ENCODE measurements at regions of chr16 and their contacts with region 1.

Region 1: DNA sequence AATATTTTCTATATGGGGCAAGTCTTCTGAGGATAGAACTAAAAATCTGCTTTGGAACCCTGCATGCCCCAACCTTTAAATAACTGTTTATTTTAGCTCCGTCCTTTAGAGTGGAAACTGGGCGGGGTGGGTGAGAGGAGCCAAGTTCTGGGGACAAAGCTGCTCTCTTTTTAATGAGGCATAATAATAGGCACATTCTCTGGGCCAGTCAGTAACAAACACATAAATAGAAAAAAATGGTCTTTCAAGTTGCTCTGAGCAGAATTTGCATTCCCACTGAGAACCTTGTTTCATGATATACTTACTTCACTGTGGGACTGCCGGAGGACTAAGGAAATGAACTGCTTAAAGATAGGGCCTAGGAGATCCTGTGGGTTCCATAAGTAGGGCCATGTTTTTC is 51.5 kb downstream of the KNOP1 start:
- DNase-seq: peak; percentile 63
- ATAC-seq: peak; percentile 90

Region 2: GRCh38 chr16:19517418-19518089 is 148.9 kb before region 1 on chr16:
- intact Hi-C with region 1: no loop called
- DNase-seq: no peak
- ATAC-seq: no peak

Region 3: DNA sequence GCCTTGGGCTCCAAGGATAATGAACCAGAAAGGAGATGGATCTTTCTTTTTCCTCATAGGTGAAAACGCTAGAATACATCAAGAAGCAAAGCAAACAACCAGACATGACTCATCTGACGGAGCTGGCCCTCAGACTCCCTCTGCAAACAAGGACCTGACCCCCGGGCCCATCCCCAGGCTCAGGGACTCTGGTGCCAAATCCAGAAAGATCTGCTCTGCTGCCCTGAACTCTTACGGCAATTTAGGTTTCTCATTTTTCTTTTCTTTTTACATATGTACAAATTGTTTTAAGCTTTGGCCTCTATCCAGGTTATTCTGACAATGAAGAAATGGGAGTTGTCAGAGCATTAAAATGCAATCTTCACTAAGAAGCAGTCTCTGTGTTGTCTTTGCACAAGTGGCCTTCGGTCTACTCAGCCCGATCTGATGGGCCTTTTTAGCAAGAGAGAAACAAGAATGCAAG is 33.9 kb after region 1 on chr16:
- intact Hi-C with region 1: loop called (anchors 5 kb)
- DNase-seq: no peak
- ATAC-seq: no peak

Measured in Right ventricle myocardium superior (tissue), 1 donor.